ENCODE measurements at regions of chr4 and their contacts with region 1.

Region 1: DNA sequence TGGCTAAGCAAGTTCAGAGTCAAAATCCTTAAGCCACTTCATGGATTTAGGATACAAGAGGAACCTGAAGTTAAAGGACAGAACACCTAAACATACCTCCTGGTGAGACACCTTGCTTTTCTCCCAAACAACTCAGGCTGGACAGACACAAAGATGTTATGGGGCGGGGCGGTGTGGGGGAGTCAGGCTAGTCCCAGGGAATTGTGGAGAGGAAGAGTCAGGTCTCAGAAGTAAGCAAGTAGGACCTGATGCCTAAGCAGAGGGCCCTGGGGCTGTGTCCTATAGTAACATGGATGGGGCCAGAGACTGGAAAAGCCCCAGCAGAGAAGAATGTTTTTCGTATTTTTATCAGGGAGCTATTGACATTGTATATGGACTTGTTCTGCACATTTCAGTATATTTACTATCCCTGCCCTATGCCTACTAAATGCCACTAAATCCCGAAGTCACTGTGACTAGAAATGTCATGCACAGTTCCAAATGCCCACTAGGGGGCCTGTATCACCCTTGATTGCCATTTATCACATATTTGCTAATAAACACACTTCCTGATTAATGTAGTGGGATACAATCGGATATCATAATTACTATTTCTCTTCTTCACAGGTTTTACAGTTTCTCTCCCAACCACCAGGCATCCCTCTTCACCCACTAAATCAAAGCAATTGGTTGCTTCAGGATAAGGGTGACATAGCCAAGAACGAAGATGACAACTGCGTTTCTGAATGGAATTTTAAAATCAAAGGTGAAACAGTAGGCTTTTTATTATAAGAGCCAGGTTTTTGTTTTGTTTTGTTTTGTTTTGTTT is 23.8 kb upstream of the ARHGAP10 start:
- DNase-seq: peak; percentile 68 to 73
- H3K4me3 ChIP-seq: no peak overlapping the region
- H3K27ac ChIP-seq: no peak overlapping the region
- H3K4me1 ChIP-seq: peaks cover 0 to 13% (median 4%) of the 10 kb centered on the region in 4 donors
- H3K27me3 ChIP-seq: no peaks in the 10 kb centered on the region
- CTCF ChIP-seq: peak in 5 of 7 experiments; percentile 76 to 95 (median 86)
- EP300 ChIP-seq: no peak
- POLR2A ChIP-seq: no peak

Region 2: GRCh38 chr4:147570616-147571015 is 137.5 kb before region 1 on chr4:
- intact Hi-C with region 1: no loop called
- DNase-seq: peak in 1 of 2 donors; percentile 19
- H3K4me3 ChIP-seq: no peak overlapping the region
- H3K27ac ChIP-seq: peak overlapping the region in 2 of 5 donors; percentile 35 to 53
- H3K4me1 ChIP-seq: no peaks in the 10 kb centered on the region
- H3K27me3 ChIP-seq: no peaks in the 10 kb centered on the region
- CTCF ChIP-seq: no peak
- EP300 ChIP-seq: no peak
- POLR2A ChIP-seq: no peak

Region 3: GRCh38 chr4:147866532-147867271 is 158.6 kb after region 1 on chr4:
- intact Hi-C with region 1: loop called (anchors 5 kb)
- DNase-seq: peak; percentile 96 to 97
- H3K4me3 ChIP-seq: no peak overlapping the region
- H3K27ac ChIP-seq: peak overlapping the region in 3 of 5 donors; percentile 12 to 54 (median 21)
- H3K4me1 ChIP-seq: peaks cover 12 to 55% (median 37%) of the 10 kb centered on the region in 4 donors
- H3K27me3 ChIP-seq: no peaks in the 10 kb centered on the region
- CTCF ChIP-seq: peak in 6 of 7 experiments; percentile 89 to 100 (median 98)
- EP300 ChIP-seq: no peak
- POLR2A ChIP-seq: no peak

Region 4: DNA sequence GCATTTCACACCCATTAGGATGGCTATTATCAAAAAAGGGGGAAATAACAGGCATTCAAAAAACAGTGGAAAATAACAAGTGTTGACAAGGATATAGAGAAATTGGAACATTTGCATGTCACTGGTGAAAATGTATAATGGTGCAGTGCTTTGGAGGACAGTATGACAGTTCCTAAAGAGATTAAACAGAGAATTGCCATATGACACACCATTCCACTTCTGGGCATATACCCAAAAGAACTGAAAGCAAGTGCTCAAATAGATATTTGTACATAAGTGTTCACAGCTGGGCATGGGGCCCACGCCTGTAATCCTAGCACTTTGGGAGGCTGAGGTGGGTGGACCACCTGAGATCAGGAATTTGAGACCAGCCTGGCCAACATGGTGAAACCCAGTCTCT is 386.1 kb after region 1 on chr4:
- intact Hi-C with region 1: no loop called
- DNase-seq: no peak
- H3K4me3 ChIP-seq: no peak overlapping the region
- H3K27ac ChIP-seq: no peak overlapping the region
- H3K4me1 ChIP-seq: no peaks in the 10 kb centered on the region
- H3K27me3 ChIP-seq: no peaks in the 10 kb centered on the region
- CTCF ChIP-seq: no peak
- EP300 ChIP-seq: no peak
- POLR2A ChIP-seq: no peak

Measured in stomach (tissue), 19 donors.